Activated naive CD4-positive, alpha-beta T cell treated with anti-CD3 and anti-CD28 coated beads, Interleukin-2, amount 10 ng/mL, durations not matched to agents 7 days and 5 days (primary cell): ENCODE measurements at regions of chr9 and their contacts with region 1.

Region 1: DNA sequence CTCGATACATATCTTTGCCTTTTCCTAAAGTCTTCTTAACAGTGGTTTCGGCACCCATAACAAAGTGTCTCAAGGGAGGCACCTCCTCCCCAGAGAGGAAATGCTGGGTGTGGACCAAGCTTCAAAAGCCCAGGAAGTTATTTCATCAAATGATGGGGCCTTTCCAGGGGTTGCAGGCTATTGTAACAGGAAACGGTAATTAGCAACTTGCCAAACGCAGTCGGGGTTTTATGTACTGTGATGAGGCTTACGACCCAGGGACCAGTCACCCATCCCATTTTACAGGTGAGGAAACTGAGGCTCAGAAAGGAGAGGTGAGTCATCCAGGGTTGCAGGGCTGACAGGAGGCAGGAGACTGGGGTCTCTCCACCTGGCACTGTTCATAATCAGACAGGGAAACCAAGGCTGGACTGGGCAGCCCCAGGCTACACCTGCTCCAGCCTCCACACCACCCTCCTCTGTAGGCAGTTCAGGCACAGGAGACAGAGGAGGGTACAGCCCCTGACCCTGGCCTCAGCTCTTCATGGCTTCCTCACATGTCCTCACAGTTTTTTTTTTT is 30.0 kb upstream of the SUSD3 start:
- DNase-seq: peak; percentile 85
- H3K4me3 Mint-ChIP-seq: peak overlapping the region; percentile 75
- H3K27ac Mint-ChIP-seq: peak overlapping the region; percentile 97
- H3K4me1 Mint-ChIP-seq: peaks cover 91% of the 10 kb centered on the region
- H3K27me3 Mint-ChIP-seq: no peaks in the 10 kb centered on the region

Region 2: DNA sequence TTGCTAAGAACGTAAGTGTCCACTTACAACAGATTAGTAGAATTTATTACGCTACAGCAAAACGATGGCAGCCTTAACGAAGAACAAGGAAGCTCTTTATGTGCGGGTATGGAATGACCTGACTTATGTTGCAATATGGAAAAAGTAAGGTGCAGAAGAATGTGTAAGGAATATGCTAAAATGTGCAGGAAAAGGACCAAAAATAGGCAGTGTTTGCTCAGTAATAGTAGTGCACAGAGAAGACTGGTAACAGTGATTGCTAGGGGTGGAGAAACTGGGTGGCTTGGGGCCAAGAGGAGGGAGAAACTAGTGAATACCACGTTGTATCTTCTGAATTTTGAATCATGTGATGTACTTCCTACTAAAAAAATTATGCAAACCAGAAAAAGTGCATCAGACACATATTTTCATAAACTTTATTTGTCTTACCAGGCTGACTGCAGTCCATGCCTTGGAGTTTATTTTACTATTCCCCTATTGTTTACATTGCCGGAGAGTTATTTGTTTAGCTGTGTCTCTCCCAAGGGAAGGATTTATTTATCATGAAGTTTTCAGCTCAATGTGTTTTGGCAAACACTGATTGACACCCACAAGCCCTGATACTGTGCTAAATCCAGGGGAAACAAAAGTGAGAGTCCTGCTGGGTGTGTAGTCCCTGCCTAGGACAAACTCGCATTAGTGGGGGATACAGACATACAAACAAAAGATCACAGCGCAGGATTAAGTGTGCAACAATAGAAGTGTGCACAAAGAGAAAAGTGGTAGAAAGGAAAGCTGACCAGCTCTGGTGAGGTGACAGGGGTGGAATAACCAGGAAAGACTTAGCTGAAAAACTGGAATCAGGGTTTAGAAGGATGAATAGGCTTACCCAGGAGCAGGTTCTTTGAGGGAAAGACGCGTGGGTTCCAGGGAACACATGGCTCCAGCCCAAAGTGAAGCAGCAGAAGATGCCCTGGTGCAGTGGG is 116.7 kb before region 1 on chr9:
- CTCF ChIA-PET with region 1: no interaction called
- DNase-seq: no peak
- H3K4me3 Mint-ChIP-seq: no peak overlapping the region
- H3K27ac Mint-ChIP-seq: no peak overlapping the region
- H3K4me1 Mint-ChIP-seq: no peaks in the 10 kb centered on the region
- H3K27me3 Mint-ChIP-seq: peaks cover 46% of the 10 kb centered on the region

Region 3: GRCh38 chr9:93064392-93065134 is 36.0 kb after region 1 on chr9:
- CTCF ChIA-PET with region 1: interaction called, 11 read pairs
- DNase-seq: peak; percentile 95
- H3K4me3 Mint-ChIP-seq: peak overlapping the region; percentile 85
- H3K27ac Mint-ChIP-seq: peak overlapping the region; percentile 100
- H3K4me1 Mint-ChIP-seq: peaks cover 88% of the 10 kb centered on the region
- H3K27me3 Mint-ChIP-seq: no peaks in the 10 kb centered on the region